Panc1 (cell line): ENCODE measurements at regions of chr2 and their contacts with region 1.

Region 1: GRCh38 chr2:190664240-190664639 is 15.4 kb downstream of the NAB1 start:
- DNase-seq: no peak
- ATAC-seq: no peak
- H3K4me3 ChIP-seq: no peak overlapping the region
- H3K27ac ChIP-seq: no peak overlapping the region
- H3K4me1 ChIP-seq: no peaks in the 10 kb centered on the region
- H3K27me3 ChIP-seq: no peaks in the 10 kb centered on the region
- CTCF ChIP-seq: no peak

Region 2: GRCh38 chr2:190256087-190256486 is 408.2 kb before region 1 on chr2:
- CTCF ChIA-PET with region 1: no interaction called
- POLR2A ChIA-PET with region 1: interaction called, 11 read pairs
- in situ Hi-C with region 1: no loop called
- intact Hi-C with region 1: no loop called
- DNase-seq: no peak
- ATAC-seq: no peak
- H3K4me3 ChIP-seq: no peak overlapping the region
- H3K27ac ChIP-seq: no peak overlapping the region
- H3K4me1 ChIP-seq: no peaks in the 10 kb centered on the region
- H3K27me3 ChIP-seq: no peaks in the 10 kb centered on the region
- CTCF ChIP-seq: no peak

Region 3: GRCh38 chr2:190615555-190616200 is 48.6 kb before region 1 on chr2:
- CTCF ChIA-PET with region 1: no interaction called
- POLR2A ChIA-PET with region 1: no interaction called
- in situ Hi-C with region 1: no loop called
- intact Hi-C with region 1: no loop called
- DNase-seq: no peak
- ATAC-seq: no peak
- H3K4me3 ChIP-seq: no peak overlapping the region
- H3K27ac ChIP-seq: no peak overlapping the region
- H3K4me1 ChIP-seq: no peaks in the 10 kb centered on the region
- H3K27me3 ChIP-seq: no peaks in the 10 kb centered on the region
- CTCF ChIP-seq: no peak

Region 4: DNA sequence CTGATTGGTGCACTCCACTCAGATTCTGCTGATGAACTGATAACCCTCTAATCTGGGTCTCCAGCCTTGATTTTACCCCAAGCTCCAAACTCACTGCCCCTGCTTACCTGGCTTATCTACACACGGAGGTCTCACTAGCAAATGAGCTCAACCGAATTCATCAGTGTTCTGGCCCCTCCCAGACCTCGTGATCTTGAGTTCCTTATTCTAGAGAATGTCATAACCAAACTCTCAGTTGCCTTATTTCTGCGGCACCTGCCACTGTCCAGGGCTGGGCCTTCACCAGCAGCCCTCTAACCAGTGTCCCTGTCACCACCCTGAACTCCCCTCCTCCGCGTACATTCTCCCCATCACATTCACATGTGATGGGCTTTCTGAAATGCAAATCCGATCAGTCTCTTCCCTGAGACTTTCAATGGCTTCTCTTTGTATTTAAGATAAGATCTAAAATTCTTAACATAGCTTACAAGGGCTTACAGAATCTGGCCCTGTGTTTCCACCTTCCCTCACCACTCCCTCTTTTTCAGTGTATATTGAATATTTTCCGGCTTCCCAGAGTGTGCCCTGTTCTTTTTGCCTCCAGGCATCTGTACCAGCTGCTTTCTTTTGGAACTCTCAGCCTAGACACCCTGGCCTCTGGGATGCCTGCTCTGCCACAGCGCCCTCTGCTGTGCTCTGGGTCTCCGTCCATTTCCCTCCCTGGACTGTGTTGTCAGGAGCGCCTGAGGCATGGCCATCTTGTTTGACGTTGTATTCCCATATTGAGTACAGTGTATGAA is 15.8 kb after region 1 on chr2:
- CTCF ChIA-PET with region 1: no interaction called
- POLR2A ChIA-PET with region 1: no interaction called
- in situ Hi-C with region 1: no loop called
- intact Hi-C with region 1: no loop called
- DNase-seq: peak; percentile 24
- ATAC-seq: peak; percentile 83
- H3K4me3 ChIP-seq: no peak overlapping the region
- H3K27ac ChIP-seq: no peak overlapping the region
- H3K4me1 ChIP-seq: peaks cover 4% of the 10 kb centered on the region; the same call in 1 of the 2 replicates
- H3K27me3 ChIP-seq: no peaks in the 10 kb centered on the region
- CTCF ChIP-seq: peak; percentile 82

Region 5: GRCh38 chr2:190879474-190880377 is 215.5 kb after region 1 on chr2:
- CTCF ChIA-PET with region 1: no interaction called
- POLR2A ChIA-PET with region 1: interaction called, 12 read pairs
- in situ Hi-C with region 1: no loop called
- intact Hi-C with region 1: no loop called
- DNase-seq: no peak
- ATAC-seq: peak; percentile 8
- H3K4me3 ChIP-seq: peak overlapping the region; percentile 89 to 92
- H3K27ac ChIP-seq: peak overlapping the region; percentile 94
- H3K4me1 ChIP-seq: peaks cover 26% of the 10 kb centered on the region
- H3K27me3 ChIP-seq: no peaks in the 10 kb centered on the region
- CTCF ChIP-seq: no peak